ENCODE measurements at regions of chr17 and their contacts with region 1.

Region 1: DNA sequence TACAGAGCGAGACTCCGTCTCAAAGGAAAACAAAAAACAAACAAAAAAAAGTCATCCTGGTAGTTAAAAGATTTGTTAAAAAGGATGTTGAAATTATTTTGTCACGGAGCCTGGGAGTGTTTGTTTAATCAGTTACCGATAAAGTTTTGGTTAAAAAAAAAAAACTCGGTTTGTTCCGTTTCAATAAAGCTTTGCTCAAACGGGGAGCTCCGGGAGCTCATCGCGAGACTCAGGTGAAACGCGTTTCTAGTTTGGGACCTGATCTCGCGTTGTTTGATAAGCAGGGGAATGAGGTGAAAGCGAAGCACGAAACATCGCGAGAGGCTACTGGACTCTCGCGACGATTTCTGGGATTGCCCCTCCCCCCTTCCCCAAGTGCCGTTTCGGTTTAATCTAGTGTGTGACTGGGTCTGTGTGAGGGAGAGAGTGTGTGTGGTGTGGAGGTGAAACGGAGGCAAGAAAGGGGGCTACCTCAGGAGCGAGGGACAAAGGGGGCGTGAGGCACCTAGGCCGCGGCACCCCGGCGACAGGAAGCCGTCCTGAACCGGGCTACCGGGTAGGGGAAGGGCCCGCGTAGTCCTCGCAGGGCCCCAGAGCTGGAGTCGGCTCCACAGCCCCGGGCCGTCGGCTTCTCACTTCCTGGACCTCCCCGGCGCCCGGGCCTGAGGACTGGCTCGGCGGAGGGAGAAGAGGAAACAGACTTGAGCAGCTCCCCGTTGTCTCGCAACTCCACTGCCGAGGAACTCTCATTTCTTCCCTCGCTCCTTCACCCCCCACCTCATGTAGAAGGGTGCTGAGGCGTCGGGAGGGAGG is at the start of gene CDK12:
- DNase-seq: peak; percentile 99
- ATAC-seq: peak; percentile 95
- H3K4me3 ChIP-seq: peak within 1 kb of the TSS; percentile 87 to 92
- H3K27ac ChIP-seq: peak within 1 kb of the TSS; percentile 91
- H3K4me1 ChIP-seq: peaks cover 12 to 29% of the 10 kb centered on the region in 2 experiments; a peak in 3 of 4 replicates
- H3K27me3 ChIP-seq: no peaks in the 10 kb centered on the region
- CTCF ChIP-seq: no peak
- POLR2A ChIP-seq: peak; percentile 93
- RAD21 ChIP-seq: no peak
- total RNA-seq, gene CDK12: 51.2 TPM

Region 2: GRCh38 chr17:39450847-39451581 is 10.3 kb before region 1 on chr17 and contains the start of gene MED1:
- CTCF ChIA-PET with region 1: interaction called, 4 read pairs
- POLR2A ChIA-PET with region 1: interaction called, 24 read pairs
- RAD21 ChIA-PET with region 1: interaction called in 1 of 2 experiments, 4 read pairs
- intact Hi-C with region 1: no loop called
- DNase-seq: peak; percentile 96
- ATAC-seq: peak; percentile 93
- H3K4me3 ChIP-seq: peak within 1 kb of the TSS; percentile 76 to 99
- H3K27ac ChIP-seq: peak within 1 kb of the TSS; percentile 64
- H3K4me1 ChIP-seq: peaks cover 2 to 19% of the 10 kb centered on the region in 2 experiments; a peak in 3 of 4 replicates
- H3K27me3 ChIP-seq: no peaks in the 10 kb centered on the region
- CTCF ChIP-seq: no peak
- POLR2A ChIP-seq: peak; percentile 85
- RAD21 ChIP-seq: no peak
- total RNA-seq, gene MED1: 55.7 TPM

Measured in HCT116 (cell line).